CD8-positive, alpha-beta T cell (primary cell): ENCODE measurements at regions of chr5 and their contacts with region 1.

Region 1: DNA sequence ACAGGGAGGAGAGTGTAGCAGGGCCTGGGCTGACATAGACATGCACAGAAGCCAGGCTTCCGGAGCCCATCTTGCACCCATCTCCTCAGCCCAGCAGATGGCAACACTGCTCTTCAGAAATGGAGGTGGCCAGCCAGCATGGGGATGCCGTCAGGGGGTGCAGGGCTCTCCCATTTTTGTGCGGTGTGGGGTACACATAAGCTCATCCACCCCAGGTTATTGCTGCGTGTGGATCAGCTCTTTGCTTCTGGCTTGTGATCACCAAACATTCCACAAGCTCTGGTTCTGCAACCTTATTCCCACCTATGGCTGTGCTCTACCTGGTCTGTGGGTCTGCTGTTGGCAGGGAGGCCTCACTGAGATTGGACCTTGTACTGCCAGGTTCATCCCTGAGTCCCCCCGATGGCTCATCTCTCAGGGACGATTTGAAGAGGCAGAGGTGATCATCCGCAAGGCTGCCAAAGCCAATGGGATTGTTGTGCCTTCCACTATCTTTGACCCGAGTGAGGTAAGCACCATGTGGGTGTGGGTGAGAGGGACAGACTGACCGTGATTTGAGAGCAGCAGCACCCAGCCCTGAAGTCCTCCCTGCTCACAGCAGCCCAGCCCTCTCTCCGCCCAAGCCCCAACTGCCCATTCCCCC is 17.3 kb downstream of the SLC22A5 start:
- DNase-seq: peak; percentile 64 to 89 (median 75)
- ATAC-seq: peak; percentile 95
- H3K4me3 ChIP-seq: no peak overlapping the region
- H3K4me3 Mint-ChIP-seq: no peak overlapping the region
- H3K27ac ChIP-seq: no peak overlapping the region
- H3K27ac Mint-ChIP-seq: no peak overlapping the region
- H3K4me1 ChIP-seq: peaks cover 19% of the 10 kb centered on the region
- H3K4me1 Mint-ChIP-seq: peaks cover 20% of the 10 kb centered on the region
- H3K27me3 ChIP-seq: no peaks in the 10 kb centered on the region
- H3K27me3 Mint-ChIP-seq: no peaks in the 10 kb centered on the region
- CTCF ChIP-seq: peak; percentile 82

Region 2: DNA sequence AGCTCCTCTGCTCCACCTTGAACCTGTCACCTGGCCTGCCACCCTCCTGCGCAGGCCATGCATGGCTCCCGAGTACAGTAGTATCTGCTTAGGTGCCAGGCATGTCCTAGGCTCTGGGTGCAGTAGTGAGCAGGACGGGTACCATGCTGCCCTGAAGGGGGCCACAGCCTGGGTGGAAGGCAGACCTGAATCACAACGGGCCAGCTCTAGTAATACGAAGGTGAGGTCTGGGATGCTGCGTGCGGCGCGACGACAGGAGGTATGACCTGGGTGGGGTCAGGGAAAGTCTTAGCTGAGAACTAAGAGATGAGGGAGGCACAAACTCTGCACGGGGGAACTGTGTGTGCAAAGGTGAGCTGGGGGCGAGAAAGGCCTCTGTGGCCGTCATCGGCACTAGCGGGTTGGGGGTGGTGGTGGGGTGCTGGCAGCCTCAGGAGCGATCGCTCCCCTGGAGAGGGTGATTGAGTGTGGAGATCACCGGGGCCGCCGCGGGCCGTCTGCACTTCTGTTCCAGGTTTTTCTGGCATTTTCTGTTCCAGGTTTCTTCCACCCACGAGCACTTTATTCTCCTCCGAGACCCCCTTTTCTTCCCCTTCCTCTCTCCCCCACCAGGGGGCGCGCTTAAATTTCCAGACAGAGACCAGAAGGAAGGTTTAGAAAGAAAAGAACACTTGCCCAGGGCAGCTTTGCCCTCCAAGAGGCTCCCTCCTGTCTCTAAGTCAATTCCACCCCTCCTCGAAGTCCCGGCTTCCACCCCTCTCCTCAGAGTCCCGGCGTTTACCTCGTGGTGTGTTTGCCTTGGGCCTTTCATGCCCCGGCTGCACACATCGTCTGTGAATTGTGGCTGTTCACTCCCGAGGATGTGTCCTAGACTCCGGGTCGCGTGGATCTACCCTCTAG is 114.2 kb before region 1 on chr5:
- CTCF ChIA-PET with region 1: no interaction called
- POLR2A ChIA-PET with region 1: no interaction called
- intact Hi-C with region 1: loop called in 1 of 2 experiments (anchors 5 kb)
- DNase-seq: peak; percentile 31 to 79 (median 62)
- ATAC-seq: peak; percentile 49
- H3K4me3 ChIP-seq: no peak overlapping the region
- H3K4me3 Mint-ChIP-seq: no peak overlapping the region
- H3K27ac ChIP-seq: no peak overlapping the region
- H3K27ac Mint-ChIP-seq: no peak overlapping the region
- H3K4me1 ChIP-seq: peaks cover 4% of the 10 kb centered on the region
- H3K4me1 Mint-ChIP-seq: peaks cover 3% of the 10 kb centered on the region
- H3K27me3 ChIP-seq: peaks cover 0 to 2% of the 10 kb centered on the region in 2 experiments
- H3K27me3 Mint-ChIP-seq: peaks cover 17% of the 10 kb centered on the region
- CTCF ChIP-seq: peak; percentile 83

Region 3: DNA sequence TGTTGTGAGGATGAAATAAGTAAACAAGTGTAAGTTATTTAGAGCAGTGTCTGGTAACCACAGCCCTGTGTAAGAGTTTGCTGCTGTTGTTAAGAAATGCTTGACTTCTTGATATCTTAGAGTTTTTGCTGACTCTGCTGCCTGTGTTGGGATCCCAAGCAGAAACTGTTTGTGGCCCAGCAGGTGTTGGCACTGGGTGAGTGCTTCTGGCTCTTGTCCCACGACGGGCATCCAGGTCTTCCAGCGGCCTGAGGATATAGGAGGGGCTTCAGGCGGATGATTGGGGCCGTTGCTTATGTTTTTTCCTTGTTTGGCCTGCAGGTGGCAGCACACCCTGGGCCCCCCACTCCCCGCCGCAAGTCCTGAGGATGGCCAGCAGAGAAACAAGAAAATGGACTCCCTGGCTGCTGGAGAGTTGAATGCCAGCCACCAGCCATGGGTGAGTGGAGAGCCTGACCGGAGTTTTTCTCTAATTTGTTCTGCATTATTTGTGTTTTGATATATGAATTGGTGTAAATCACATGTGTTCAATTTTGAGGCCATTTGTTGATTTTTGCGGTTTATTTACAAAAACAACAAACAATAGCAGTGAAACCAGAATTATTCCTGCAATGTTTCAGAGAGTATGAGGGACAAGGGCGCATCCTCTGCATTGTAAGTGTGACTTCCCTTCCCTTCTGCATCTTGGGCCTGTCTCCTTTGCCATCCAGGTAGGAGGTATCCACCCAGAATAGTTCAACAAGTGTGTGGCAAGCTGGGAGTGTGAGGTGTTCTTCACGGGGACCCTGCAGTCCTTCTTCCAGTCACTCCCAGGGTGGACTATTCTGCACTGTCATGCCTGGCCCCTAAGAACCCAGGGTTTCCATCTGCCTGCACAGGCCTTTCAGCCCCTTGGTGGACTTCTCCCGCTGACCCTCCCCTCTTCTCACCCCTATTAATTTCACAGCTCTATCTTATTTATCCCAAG is 33.0 kb after region 1 on chr5:
- CTCF ChIA-PET with region 1: interaction called, 17 read pairs
- POLR2A ChIA-PET with region 1: no interaction called
- intact Hi-C with region 1: loop called in 1 of 2 experiments (anchors 2 kb)
- DNase-seq: peak; percentile 27 to 84 (median 64)
- ATAC-seq: peak; percentile 71
- H3K4me3 ChIP-seq: peak overlapping the region; percentile 6 to 9
- H3K4me3 Mint-ChIP-seq: peak overlapping the region; percentile 80
- H3K27ac ChIP-seq: peak overlapping the region; percentile 38 to 98
- H3K27ac Mint-ChIP-seq: peak overlapping the region; percentile 94
- H3K4me1 ChIP-seq: peaks cover 82% of the 10 kb centered on the region
- H3K4me1 Mint-ChIP-seq: peaks cover 92% of the 10 kb centered on the region
- H3K27me3 ChIP-seq: no peaks in the 10 kb centered on the region
- H3K27me3 Mint-ChIP-seq: no peaks in the 10 kb centered on the region
- CTCF ChIP-seq: peak; percentile 89

Region 4: DNA sequence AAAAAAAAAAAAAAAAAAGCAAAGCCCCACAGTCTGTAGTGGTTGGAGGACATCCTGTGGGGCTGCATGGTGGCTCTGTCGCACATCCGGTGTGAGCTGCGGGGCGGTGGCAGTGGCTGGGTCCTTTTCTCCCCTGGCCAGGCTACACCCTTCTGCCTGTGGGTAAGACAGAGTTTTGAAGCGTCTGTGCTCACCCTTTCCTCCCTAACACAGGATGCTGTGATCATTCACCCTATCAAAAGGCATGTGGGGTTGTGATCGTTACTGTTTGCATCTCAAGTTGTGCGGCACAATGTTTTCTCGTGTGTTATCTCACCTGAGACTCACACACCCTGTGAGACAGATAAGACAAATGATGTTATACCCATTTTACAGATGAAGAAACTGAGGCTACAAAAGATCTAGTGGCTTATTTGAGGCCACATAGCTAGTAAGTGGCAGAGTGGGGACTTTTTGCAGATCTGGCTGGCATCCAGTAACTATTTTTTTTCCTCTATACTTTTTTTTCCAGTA is 86.3 kb after region 1 on chr5:
- CTCF ChIA-PET with region 1: interaction called, 27 read pairs
- POLR2A ChIA-PET with region 1: interaction called, 4 read pairs
- intact Hi-C with region 1: no loop called
- DNase-seq: peak; percentile 70 to 97 (median 85)
- ATAC-seq: peak; percentile 73
- H3K4me3 ChIP-seq: no peak overlapping the region
- H3K4me3 Mint-ChIP-seq: peak overlapping the region; percentile 5
- H3K27ac ChIP-seq: peak overlapping the region; percentile 52 to 93
- H3K27ac Mint-ChIP-seq: peak overlapping the region; percentile 87
- H3K4me1 ChIP-seq: peaks cover 82% of the 10 kb centered on the region
- H3K4me1 Mint-ChIP-seq: peaks cover 92% of the 10 kb centered on the region
- H3K27me3 ChIP-seq: no peaks in the 10 kb centered on the region
- H3K27me3 Mint-ChIP-seq: no peaks in the 10 kb centered on the region
- CTCF ChIP-seq: no peak

Region 5: DNA sequence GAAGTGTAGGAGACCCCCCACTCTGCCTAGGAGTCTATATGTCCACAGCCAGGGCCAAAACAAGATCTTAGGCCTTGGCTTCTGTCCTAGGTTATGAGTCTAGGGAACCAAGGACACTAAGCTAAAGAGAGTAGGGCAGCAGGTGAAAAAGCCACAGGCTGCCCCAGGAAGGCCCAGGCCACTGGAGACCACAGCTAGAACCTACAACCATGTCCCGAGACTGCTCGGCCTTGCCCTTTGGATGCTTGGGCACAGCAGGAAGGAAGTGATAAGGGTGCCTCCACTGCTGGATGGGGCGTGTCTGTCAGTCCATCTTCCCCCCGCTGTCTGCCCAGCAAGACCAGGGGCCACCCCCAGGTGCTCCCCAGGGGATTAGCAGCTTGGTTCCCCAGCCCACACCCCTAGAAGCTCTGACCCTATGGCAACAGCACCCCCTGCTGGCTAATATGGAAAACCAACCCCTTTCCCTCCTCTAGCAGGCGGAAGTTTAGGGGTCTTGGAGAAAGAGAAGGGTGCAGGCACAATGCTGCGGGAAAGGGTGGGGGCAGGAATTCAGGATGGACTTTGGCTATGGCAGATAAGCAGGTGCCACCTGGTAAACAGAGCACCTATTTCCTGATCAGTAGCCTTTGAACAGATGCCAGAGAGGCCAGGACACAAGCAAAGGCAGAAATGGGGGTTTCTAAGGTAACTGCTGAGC is 114.3 kb after region 1 on chr5:
- CTCF ChIA-PET with region 1: interaction called, 425 read pairs
- POLR2A ChIA-PET with region 1: interaction called, 7 read pairs
- intact Hi-C with region 1: loop called (anchors 1 kb)
- DNase-seq: peak; percentile 49 to 89 (median 79)
- ATAC-seq: peak; percentile 26
- H3K4me3 ChIP-seq: no peak overlapping the region
- H3K4me3 Mint-ChIP-seq: no peak overlapping the region
- H3K27ac ChIP-seq: peak overlapping the region in 1 of 2 experiments; percentile 86
- H3K27ac Mint-ChIP-seq: no peak overlapping the region
- H3K4me1 ChIP-seq: peaks cover 32% of the 10 kb centered on the region
- H3K4me1 Mint-ChIP-seq: peaks cover 36% of the 10 kb centered on the region
- H3K27me3 ChIP-seq: no peaks in the 10 kb centered on the region
- H3K27me3 Mint-ChIP-seq: peaks cover 3% of the 10 kb centered on the region
- CTCF ChIP-seq: peak; percentile 76

Region 6: GRCh38 chr5:132714456-132715307 is 327.9 kb after region 1 on chr5:
- CTCF ChIA-PET with region 1: interaction called, 6 read pairs
- POLR2A ChIA-PET with region 1: no interaction called
- intact Hi-C with region 1: loop called (anchors 1 to 2 kb)
- DNase-seq: peak in 2 of 9 experiments; percentile 14 to 41
- ATAC-seq: no peak
- H3K4me3 ChIP-seq: no peak overlapping the region
- H3K4me3 Mint-ChIP-seq: no peak overlapping the region
- H3K27ac ChIP-seq: no peak overlapping the region
- H3K27ac Mint-ChIP-seq: no peak overlapping the region
- H3K4me1 ChIP-seq: no peaks in the 10 kb centered on the region
- H3K4me1 Mint-ChIP-seq: peaks cover 6% of the 10 kb centered on the region
- H3K27me3 ChIP-seq: no peaks in the 10 kb centered on the region
- H3K27me3 Mint-ChIP-seq: no peaks in the 10 kb centered on the region
- CTCF ChIP-seq: peak; percentile 79